A673 (cell line): ENCODE measurements at regions of chr9 and their contacts with region 1.

Region 1: GRCh38 chr9:120985810-120986222 is 59.2 kb upstream of the TRAF1 start:
- DNase-seq: peak; percentile 64
- H3K4me3 ChIP-seq: no peak overlapping the region
- H3K27ac ChIP-seq: no peak overlapping the region
- H3K4me1 ChIP-seq: no peaks in the 10 kb centered on the region
- H3K27me3 ChIP-seq: no peaks in the 10 kb centered on the region
- CTCF ChIP-seq: peak; percentile 69

Region 2: DNA sequence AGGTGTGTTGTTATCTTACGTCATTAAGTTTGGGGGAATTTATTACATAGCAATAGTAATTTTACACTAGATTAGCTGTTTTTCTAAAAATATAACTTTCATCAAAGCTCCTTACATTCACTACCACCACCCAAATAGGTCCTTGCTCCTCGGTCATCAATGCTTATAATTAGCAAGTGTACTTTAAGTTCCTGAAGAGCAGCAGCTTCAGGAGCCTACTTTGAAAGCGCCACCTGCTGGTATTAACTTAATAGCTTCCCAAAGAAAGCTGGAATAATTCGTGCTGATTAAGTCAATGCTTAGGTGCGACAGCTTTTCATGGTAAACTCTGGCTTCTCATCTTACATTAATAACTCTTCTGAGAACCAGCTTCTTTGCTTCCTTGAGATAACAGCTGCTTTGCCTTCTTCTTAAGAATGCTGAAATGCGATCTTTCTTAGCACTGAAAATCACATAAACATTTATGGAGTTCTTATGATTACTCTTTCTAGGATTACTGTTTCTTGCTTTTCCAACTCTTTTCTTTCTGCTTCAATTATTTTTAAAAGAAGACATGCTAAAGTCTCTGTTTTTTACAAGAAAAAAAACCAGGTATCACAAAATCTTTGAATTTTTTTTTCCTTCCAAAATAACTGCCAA is 74.3 kb after region 1 on chr9:
- CTCF ChIA-PET with region 1: interaction called, 29 read pairs
- POLR2A ChIA-PET with region 1: interaction called, 5 read pairs
- intact Hi-C with region 1: loop called (anchors 5 kb)
- DNase-seq: peak; percentile 86
- H3K4me3 ChIP-seq: no peak overlapping the region
- H3K27ac ChIP-seq: no peak overlapping the region
- H3K4me1 ChIP-seq: peaks cover 5% of the 10 kb centered on the region
- H3K27me3 ChIP-seq: no peaks in the 10 kb centered on the region
- CTCF ChIP-seq: peak; percentile 88

Region 3: DNA sequence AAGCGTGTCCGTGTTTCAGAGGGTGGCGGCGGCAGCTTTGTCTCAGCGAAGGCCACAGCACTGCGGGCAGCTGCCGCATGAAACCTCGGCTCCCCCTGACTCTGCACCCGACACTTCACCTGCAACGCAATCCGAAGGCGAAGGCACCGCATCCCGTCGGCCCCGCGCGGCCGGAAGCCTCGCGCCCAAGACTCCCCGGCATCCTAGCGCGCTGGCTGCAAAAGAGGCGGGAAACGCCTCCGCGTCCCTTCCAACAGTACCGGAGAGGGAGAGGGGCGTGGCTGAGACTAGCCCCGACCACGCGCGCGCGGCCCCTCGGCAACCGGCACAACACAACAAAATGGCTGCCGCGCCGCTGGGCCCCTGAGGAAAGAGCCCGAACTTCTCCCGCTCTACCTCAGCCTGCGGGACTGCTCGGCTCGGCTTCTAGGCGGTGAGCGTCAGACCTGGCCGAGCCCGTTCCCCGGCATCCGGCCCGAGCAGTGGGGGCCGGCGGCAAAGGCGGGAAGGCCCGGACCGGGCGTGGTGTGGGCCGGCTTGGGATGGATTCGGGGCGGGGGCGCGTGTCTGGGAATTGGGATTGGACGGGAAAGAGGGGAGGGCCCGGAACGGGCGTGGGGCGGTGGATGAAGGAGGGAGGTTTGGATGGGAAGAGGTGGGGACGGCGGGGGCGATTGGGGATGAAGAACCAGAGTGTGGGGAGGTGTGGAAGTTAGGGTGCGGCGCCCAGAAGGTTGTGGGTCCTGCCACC is 89.0 kb after region 1 on chr9 and contains the start of gene CNTRL:
- CTCF ChIA-PET with region 1: no interaction called
- POLR2A ChIA-PET with region 1: no interaction called
- intact Hi-C with region 1: loop called (anchors 5 kb)
- DNase-seq: peak; percentile 96
- H3K4me3 ChIP-seq: peak within 1 kb of the TSS; percentile 61
- H3K27ac ChIP-seq: peak within 1 kb of the TSS; percentile 89
- H3K4me1 ChIP-seq: peaks cover 28% of the 10 kb centered on the region
- H3K27me3 ChIP-seq: no peaks in the 10 kb centered on the region
- CTCF ChIP-seq: no peak
- total RNA-seq, gene CNTRL: 26.3 and 30.0 TPM in 2 replicates

Region 4: DNA sequence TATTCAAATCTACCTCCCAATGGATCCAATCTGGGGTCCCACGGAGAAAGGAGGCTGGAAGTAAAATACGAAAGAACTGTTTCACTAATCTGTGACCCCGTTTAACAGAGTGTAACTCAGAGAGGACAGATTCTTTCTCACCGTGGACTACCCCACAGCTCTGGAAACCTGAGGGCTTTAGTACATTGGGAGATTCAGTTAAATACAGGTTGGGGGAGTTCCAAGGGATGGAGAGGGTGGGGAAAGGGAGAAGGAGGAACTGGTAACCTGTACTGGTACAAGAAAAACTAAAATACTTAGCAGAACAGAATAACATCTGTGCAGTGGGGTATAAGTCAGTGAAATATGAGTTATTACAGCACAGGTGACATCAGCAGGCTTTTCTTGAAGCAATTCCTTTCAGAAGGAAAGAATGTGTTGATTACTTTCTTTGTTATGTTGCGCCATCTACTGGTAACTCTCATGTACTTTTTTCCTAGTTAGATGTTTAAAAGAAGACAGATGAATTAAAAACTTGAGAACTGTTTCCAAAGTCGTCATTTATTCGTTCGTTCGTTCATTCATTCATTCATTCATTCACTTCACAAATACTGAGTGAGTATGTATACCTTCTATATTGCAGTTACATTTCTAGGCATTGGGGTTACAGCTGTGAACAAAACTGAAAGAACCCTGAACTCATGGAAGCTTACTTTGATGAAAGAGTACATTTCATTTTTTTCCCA is 414.2 kb after region 1 on chr9:
- CTCF ChIA-PET with region 1: interaction called, 3 read pairs
- POLR2A ChIA-PET with region 1: no interaction called
- intact Hi-C with region 1: loop called (anchors 5 kb)
- DNase-seq: peak; percentile 80
- H3K4me3 ChIP-seq: no peak overlapping the region
- H3K27ac ChIP-seq: no peak overlapping the region
- H3K4me1 ChIP-seq: no peaks in the 10 kb centered on the region
- H3K27me3 ChIP-seq: no peaks in the 10 kb centered on the region
- CTCF ChIP-seq: peak; percentile 70